Motor neuron (in vitro differentiated cells): ENCODE measurements at regions of chr20 and their contacts with region 1.

Region 1: DNA sequence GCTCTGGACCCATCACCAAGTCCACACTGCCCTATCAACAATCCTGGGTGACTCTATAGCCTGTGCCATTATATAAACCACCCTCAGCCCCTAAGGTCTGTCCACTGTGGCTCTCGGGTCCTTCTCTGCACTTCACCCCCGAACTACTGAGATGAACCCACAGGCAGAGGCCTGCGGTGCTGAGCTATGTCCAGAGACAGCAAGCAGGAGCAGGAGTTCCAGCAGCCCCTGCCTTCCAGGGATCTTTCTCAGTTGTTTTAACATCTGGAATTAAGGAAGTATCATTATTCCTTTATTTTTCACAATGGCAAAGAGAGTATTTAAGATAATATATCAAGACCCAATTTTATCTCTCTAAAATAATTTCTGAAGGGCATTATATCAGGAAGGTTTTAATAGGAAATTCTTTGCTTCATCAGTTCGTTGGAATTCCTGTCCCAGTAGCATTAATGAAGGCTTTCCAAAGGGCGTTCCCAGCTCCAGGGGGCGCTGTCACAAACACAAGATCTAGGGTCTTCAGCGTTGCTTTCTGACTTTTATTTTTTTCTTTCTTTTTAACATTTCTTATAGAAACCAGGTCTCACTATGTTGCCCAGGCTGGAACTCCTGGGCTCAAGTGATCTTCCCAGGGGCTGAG is 27.3 kb downstream of the RRBP1 start:
- ATAC-seq: no peak
- H3K4me3 ChIP-seq: no peak overlapping the region
- H3K27ac ChIP-seq: no peak overlapping the region
- H3K4me1 ChIP-seq: no peaks in the 10 kb centered on the region

Region 2: DNA sequence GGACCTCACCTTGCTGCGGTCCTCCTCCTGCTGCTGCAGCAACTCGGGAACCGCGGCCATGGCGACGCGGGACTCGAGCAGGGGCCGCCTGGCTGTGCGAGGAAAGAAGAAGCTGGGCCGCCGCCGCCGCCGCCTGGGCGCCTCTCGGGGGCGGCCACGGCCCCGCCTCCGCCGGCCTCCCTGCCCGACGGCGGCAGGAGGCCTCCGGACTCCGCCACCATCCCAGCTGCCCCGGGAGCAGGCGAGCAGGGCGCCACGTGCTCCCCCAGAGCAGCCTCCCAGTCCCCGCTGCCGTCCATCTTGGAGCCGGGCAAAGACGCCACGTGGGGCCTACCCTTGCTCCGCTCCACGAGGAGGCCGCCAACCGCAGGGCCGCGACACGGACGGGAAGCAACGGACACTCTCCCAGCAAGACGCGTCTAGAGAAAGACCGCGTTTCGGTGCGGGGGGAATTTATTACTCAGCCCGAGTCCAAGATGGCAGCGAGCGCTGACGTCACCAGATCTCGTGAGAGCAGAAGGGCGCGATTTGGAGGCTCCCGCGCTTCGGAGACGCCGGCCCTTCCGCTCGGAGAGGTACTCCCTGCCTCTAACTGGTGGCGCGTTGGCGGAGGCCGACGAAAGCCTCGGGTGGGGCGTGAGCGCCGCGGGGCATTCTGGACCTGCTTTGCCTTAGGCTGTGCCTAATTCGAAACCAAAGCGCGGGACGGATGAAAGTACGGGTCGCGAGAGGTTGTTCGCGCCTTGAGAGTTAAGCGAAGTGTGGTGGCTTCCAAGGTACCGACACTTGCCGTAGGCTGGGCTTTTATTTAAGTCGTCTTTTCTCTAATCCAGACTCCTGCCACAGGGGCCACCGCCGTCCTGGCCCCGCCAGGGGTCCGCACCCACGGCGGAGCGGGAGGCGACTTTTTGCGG is 313.9 kb after region 1 on chr20 and contains the starts of genes MGME1 and SNX5:
- in situ Hi-C with region 1: loop called in 1 of 9 experiments (anchors 25 kb)
- ATAC-seq: peak; percentile 79 to 94 (median 92)
- H3K4me3 ChIP-seq: peak within 1 kb of the TSS; percentile 64 to 83 (median 66)
- H3K27ac ChIP-seq: peak within 1 kb of the TSS; percentile 100
- H3K4me1 ChIP-seq: peaks cover 19 to 38% of the 10 kb centered on the region in 2 donors
- total RNA-seq, gene MGME1: 8.8 to 36.6 (median 15.0) TPM
- total RNA-seq, gene SNX5: 41.7 to 199 (median 73.8) TPM